HEK293 (cell line): ENCODE measurements at regions of chr10 and their contacts with region 1.

Region 1: GRCh38 chr10:119103903-119104652 is at the start of gene DENND10:
- H3K4me3 ChIP-seq: peak within 1 kb of the TSS; percentile 65
- H3K27ac ChIP-seq: peak within 1 kb of the TSS; percentile 71; the same call in 1 of the 2 replicates
- H3K4me1 ChIP-seq: peaks cover 6% of the 10 kb centered on the region
- CTCF ChIP-seq: no peak

Region 2: DNA sequence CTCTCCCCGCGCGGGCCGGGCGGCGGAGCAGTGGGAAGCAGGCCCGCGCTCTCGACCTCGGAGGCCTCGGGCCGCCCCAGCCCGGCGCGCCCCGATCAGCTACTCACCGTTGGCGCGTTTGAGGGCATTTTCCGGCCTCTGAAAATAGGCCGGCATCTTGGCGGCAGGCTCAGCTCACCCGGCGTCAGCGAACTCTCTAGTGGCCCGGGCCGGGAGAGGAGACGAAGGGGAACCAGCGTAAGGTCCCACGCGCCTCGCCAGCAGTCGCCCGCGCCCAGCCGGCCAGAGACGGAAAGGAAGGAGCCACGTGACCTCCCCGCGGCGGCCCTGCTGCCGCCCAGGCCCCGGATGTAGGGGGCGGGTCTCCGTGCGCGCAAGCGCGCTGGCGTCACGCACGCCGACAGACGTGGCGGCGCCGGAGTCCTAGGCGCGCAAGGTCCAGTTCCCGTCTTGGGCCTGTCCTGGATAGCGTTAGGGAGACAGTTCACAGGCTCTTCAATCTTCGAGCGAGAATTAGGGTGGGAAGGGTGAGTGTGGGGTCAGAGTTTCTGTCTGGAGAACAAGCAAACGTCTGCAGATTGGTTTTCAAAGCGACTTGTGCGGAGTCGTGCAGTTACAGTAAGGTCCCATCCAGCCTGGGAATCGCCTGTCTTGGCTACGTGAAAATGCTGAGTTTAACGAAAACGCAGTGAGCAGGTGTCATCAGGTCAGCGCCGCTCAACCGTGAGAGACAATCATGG is 23.4 kb before region 1 on chr10 and contains the start of gene EIF3A:
- CTCF ChIA-PET with region 1: interaction called, 4 read pairs
- POLR2A ChIA-PET with region 1: interaction called, 19 read pairs
- H3K4me3 ChIP-seq: peak within 1 kb of the TSS; percentile 94
- H3K27ac ChIP-seq: peak within 1 kb of the TSS; percentile 96
- H3K4me1 ChIP-seq: peaks cover 10% of the 10 kb centered on the region
- CTCF ChIP-seq: no peak; the same call in 1 of the 2 replicates

Region 3: GRCh38 chr10:119090968-119091367 is 13.1 kb before region 1 on chr10:
- CTCF ChIA-PET with region 1: no interaction called
- POLR2A ChIA-PET with region 1: interaction called, 13 read pairs
- H3K4me3 ChIP-seq: no peak overlapping the region
- H3K27ac ChIP-seq: no peak overlapping the region; the same call in 1 of the 2 replicates
- H3K4me1 ChIP-seq: peaks cover 12% of the 10 kb centered on the region
- CTCF ChIP-seq: no peak